ENCODE measurements at regions of chr15 and their contacts with region 1.

Region 1: DNA sequence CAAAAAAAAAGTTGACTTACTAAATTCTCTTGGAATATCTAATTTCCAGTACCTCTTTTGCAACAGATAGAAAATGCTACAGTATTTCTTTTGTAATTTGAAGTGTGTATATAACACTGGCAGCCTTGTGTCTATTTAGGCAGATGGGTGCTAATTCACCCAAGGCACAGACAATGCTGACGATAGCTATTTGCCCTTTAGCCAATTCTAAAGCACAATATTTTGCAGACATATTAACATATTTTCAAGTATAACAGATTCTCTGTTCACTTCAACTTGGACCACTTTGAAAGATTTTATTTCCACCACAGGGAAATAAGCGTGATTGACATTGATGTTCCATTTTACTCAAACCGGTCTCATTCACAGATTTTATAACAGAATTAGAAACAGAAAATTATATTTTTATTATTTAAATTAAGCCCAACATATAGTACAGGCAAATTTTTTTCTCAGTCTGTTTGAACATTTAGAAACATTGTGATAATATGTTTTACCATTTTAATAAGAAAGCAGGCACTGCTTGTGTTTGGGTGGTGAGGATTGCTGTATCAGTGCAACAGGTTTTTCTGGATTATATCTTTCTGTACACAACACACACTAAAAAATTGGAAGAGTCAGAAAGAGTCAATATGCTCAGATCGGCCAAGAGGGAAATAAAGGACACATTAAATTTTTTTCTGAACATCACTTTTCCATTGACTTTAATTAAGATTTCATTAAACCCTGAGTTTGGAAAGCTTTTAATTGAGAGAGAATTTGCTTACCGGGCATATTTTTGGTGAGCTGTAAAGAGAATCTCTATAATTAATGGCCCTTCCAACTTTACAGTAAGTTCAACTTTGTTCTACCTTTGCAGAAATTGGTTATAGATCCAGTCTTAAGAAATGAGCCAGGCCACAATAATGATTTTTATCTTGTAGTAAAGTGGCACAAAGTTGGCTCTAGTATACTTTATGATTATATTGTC is 327.3 kb upstream of the NR2F2 start:
- DNase-seq: no peak
- ATAC-seq: no peak

Region 2: GRCh38 chr15:95734422-95735316 is 268.5 kb before region 1 on chr15:
- intact Hi-C with region 1: no loop called
- DNase-seq: no peak
- ATAC-seq: peak in 1 of 2 donors; percentile 42

Region 3: DNA sequence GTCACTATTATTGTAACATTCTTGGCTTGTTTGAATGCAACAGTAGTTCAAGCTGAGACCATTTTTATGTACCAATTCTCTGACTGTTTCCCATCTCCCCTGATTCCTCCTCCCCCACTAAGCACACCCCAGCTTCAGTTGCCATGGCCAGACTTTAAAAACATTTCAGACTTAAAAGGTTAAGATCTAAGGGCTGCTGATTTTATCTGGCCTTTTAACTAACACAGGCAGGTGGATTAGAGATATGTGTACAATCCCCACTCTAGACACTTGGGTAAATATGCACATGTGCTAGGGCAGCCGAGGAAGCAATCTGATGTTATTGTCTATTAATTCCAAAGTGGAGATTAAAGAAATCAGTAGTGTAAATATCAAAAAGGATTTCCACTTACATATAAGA is 58.9 kb before region 1 on chr15:
- intact Hi-C with region 1: loop called in 1 of 2 experiments (anchors 10 kb)
- DNase-seq: no peak
- ATAC-seq: no peak

Region 4: GRCh38 chr15:96053031-96053780 is 50.0 kb after region 1 on chr15:
- intact Hi-C with region 1: no loop called
- DNase-seq: peak; percentile 66
- ATAC-seq: peak; percentile 92 to 93

Region 5: GRCh38 chr15:96064351-96064756 is 61.2 kb after region 1 on chr15:
- intact Hi-C with region 1: no loop called
- DNase-seq: no peak
- ATAC-seq: peak in 1 of 2 donors; percentile 50

Region 6: GRCh38 chr15:96514607-96515285 is 511.6 kb after region 1 on chr15:
- intact Hi-C with region 1: no loop called
- DNase-seq: no peak
- ATAC-seq: no peak